GM10248 (cell line): ENCODE measurements at regions of chr15 and their contacts with region 1.

Region 1: GRCh38 chr15:79184465-79184892 is 93.9 kb upstream of the RASGRF1 start:
- DNase-seq: peak; percentile 74
- CTCF ChIP-seq: peak; percentile 96

Region 2: GRCh38 chr15:78909791-78910228 is 274.7 kb before region 1 on chr15:
- CTCF ChIA-PET with region 1: interaction called, 58 read pairs
- POLR2A ChIA-PET with region 1: no interaction called
- DNase-seq: peak; percentile 51
- CTCF ChIP-seq: peak; percentile 64

Region 3: DNA sequence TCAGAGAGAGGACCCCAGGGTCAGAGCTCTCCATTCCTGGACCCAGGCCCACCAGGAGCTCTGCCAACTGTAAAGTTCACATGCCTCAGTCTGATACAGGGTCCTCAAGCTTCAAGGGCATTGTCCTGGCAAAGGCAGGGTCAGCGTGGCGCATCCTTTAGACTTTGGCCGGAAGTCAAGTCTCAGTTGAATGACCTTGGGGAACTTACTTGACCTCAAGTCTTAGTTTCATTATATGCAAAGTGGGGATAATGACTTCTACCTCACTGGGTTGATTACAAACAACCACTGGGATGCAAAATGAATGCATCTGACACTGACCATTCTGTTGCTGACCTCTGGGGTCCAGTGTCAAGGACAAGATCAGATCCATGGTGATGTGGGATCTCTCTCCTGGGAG is 169.1 kb before region 1 on chr15:
- CTCF ChIA-PET with region 1: interaction called, 19 read pairs
- POLR2A ChIA-PET with region 1: no interaction called
- DNase-seq: no peak
- CTCF ChIP-seq: no peak

Region 4: GRCh38 chr15:79049416-79049815 is 135.1 kb before region 1 on chr15:
- CTCF ChIA-PET with region 1: interaction called, 15 read pairs
- POLR2A ChIA-PET with region 1: no interaction called
- DNase-seq: no peak
- CTCF ChIP-seq: no peak

Region 5: GRCh38 chr15:79128556-79128955 is 55.9 kb before region 1 on chr15:
- CTCF ChIA-PET with region 1: interaction called, 10 read pairs
- POLR2A ChIA-PET with region 1: no interaction called
- DNase-seq: no peak
- CTCF ChIP-seq: no peak

Region 6: DNA sequence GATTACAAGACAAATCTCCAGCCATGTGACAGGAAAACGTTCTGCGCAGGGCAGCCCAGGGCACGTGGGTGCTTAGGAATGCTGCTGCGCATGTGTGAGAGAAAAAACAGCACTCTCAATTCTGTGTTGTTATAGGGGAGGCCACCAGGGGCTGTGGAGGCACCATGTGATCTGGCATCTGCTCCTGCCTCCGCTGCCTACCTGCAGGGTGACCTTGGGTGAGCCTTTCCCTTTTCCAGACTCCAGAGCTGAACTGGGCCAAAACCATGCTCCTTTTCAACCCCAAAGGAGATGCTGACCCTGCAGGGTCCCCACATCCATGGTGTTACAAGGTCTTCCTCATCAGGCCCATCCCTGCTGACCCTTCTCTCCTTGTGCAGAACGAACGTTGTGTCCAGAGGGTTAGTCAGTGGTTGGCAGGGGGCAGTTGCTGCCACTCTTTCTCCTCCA is 12.4 kb before region 1 on chr15:
- CTCF ChIA-PET with region 1: interaction called, 40 read pairs
- POLR2A ChIA-PET with region 1: no interaction called
- DNase-seq: no peak
- CTCF ChIP-seq: no peak

Region 7: DNA sequence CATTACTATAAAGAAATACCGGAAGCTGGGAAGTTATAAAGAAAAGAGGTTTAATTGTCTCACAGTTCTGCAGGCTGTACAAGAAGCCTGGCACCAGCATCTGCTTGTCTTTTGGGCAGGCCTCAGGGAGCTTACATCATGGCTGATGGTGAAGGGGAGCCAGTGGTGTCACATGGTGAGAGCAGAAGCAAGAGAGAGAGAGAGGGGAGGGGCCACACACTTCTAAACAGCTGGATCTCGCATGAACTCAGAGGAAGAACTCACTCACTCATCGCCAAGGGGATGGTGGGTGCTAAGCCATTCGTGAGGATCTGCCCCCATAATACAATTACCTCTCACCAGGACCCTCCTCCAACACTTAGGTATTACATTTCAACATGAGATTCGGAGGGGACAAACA is 46.3 kb after region 1 on chr15:
- CTCF ChIA-PET with region 1: interaction called, 10 read pairs
- POLR2A ChIA-PET with region 1: no interaction called
- DNase-seq: no peak
- CTCF ChIP-seq: no peak

Region 8: DNA sequence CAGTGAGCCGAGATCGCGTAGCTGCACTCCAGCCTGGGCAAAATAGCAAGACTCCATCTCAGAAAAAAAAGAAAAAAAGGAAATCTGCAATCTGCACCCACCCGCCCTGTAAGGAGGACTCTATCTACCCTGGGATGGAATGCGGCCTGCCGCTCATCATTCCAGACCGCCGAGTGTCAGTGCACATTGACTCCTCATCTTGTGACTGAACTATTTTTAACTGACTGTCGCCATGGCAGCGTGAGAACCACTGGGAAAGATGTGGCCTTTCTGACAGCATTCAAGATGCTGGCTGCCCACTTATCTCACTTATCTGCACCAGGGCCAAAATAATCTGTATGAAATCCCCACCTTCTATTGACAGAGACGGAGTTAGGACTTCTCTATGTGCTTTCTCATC is 59.2 kb after region 1 on chr15:
- CTCF ChIA-PET with region 1: no interaction called
- POLR2A ChIA-PET with region 1: no interaction called
- DNase-seq: no peak
- CTCF ChIP-seq: no peak